H1 (cell line): ENCODE measurements at regions of chr15 and their contacts with region 1.

Region 1: DNA sequence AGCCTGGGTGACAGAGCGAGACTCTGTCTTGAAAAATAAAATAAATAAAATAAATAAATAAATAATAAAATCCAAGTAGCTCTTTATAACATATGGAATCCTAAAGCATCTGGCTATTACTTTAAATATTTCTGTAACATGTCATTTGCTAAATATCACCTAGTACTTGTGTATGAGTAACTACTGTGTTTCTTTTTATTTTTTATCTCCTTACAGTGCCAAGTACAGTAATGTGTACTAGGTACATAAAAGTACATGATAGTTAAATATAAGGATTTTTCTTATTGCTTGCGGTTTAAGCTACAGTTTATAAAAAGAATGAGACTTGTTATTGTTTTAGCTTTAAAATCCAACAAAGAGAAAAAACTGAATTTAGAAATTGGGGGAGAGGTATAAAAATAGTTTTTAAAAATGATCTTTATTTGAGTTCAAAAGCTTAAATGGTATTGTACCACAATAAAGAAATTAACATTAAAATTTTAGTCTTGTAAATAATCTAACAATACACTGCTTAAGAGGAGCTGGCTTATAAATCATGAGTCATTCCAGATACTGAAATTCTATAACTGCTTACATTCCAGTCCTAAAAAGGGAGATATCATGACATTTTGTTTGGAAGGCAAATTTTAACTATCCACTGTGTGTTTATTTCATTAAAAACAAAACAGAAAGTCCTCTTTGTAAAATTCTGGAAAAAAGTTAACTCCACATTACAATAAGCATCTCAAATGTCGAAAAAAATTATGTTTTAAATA is 73.1 kb downstream of the FGF7 start:
- DNase-seq: no peak
- H3K4me3 ChIP-seq: no peak overlapping the region
- H3K27ac ChIP-seq: no peak overlapping the region
- H3K4me1 ChIP-seq: no peaks in the 10 kb centered on the region
- H3K27me3 ChIP-seq: no peaks in the 10 kb centered on the region
- CTCF ChIP-seq: no peak
- EP300 ChIP-seq: no peak
- POLR2A ChIP-seq: no peak
- RAD21 ChIP-seq: no peak

Region 2: DNA sequence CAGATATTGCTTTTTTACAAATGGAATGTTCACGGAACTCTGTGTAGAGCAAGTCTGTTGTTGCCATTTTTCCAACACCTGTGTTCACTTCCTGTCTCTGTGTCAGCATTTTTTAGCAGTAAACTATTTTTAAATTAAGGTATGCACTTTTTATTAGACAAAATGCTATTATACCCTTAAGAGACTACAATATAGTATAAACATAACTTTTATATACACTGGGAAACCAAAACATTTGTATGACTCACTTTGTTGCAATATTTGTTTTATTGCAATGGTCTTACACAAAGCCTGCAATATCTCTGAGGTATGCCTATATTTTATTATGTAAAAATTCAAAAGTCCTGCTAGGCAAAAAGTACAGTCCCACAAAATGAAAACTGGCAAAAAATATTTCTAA is 112.9 kb before region 1 on chr15:
- CTCF ChIA-PET with region 1: no interaction called
- POLR2A ChIA-PET with region 1: no interaction called
- DNase-seq: no peak
- H3K4me3 ChIP-seq: no peak overlapping the region
- H3K27ac ChIP-seq: no peak overlapping the region
- H3K4me1 ChIP-seq: peaks cover 0 to 8% (median 4%) of the 10 kb centered on the region in 4 experiments; a peak in 4 of 7 replicates
- H3K27me3 ChIP-seq: no peaks in the 10 kb centered on the region
- CTCF ChIP-seq: no peak
- EP300 ChIP-seq: no peak
- POLR2A ChIP-seq: no peak
- RAD21 ChIP-seq: no peak

Region 3: GRCh38 chr15:49471733-49472132 is 24.4 kb before region 1 on chr15:
- CTCF ChIA-PET with region 1: interaction called, 14 read pairs
- POLR2A ChIA-PET with region 1: no interaction called
- DNase-seq: no peak
- H3K4me3 ChIP-seq: no peak overlapping the region
- H3K27ac ChIP-seq: no peak overlapping the region
- H3K4me1 ChIP-seq: no peaks in the 10 kb centered on the region
- H3K27me3 ChIP-seq: no peaks in the 10 kb centered on the region
- CTCF ChIP-seq: no peak
- EP300 ChIP-seq: no peak
- POLR2A ChIP-seq: no peak
- RAD21 ChIP-seq: no peak